Heart left ventricle (tissue), 16 donors: ENCODE measurements at regions of chr18 and their contacts with region 1.

Region 1: DNA sequence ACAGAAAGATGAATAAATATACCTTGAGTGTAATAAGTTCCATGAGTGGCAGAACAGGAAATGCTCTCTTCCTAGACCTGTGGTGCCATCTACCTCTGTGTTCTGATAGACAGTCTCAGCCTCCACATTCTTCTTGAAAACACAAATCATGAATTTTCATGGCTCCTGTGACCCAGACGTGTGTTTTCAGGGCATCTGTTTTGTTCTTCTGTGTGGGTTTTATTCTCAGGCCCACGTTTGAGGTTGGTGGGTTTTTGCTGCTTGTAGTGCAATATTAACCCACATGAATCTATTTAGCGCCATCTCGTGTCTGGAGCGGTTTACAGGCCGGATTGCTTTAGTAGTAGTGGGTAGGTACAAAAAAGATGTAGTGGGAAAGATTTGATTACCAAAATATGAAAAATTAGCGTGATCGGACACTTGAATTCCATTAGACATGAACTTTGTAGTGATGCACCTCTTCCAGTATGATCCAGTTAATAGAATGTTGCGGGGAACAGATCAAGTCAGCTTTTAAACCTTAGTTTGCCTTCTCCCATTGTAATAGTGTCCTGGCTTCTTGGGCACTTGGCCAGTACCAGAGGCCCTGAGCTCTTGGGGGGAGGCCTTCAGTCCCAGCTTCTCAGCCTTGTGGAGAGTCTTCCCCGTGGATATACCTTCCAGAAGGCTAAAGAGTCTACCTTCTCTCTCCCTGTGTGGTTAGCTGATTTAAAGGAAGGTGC is 256.5 kb downstream of the TPGS2 start:
- DNase-seq: peak in 1 of 5 donors; percentile 39
- ATAC-seq: peak; percentile 53 to 77 (median 69)
- H3K4me3 ChIP-seq: no peak overlapping the region
- H3K27ac ChIP-seq: peak overlapping the region in 6 of 12 donors; percentile 6 to 45 (median 24)
- H3K4me1 ChIP-seq: peaks cover 0 to 17% (median 0%) of the 10 kb centered on the region in 12 donors
- H3K27me3 ChIP-seq: peaks cover 0 to 2% (median 0%) of the 10 kb centered on the region in 9 donors
- CTCF ChIP-seq: peak; percentile 11 to 67 (median 51)
- POLR2A ChIP-seq: no peak

Region 2: GRCh38 chr18:36095936-36096519 is 476.3 kb before region 1 on chr18:
- intact Hi-C with region 1: loop called in 3 of 10 experiments (anchors 10 kb)
- DNase-seq: no peak
- ATAC-seq: peak in 1 of 4 donors; percentile 42
- H3K4me3 ChIP-seq: no peak overlapping the region
- H3K27ac ChIP-seq: no peak overlapping the region
- H3K4me1 ChIP-seq: no peaks in the 10 kb centered on the region
- H3K27me3 ChIP-seq: peaks cover 0 to 5% (median 0%) of the 10 kb centered on the region in 9 donors
- CTCF ChIP-seq: peak; percentile 34 to 77 (median 54)
- POLR2A ChIP-seq: no peak

Region 3: DNA sequence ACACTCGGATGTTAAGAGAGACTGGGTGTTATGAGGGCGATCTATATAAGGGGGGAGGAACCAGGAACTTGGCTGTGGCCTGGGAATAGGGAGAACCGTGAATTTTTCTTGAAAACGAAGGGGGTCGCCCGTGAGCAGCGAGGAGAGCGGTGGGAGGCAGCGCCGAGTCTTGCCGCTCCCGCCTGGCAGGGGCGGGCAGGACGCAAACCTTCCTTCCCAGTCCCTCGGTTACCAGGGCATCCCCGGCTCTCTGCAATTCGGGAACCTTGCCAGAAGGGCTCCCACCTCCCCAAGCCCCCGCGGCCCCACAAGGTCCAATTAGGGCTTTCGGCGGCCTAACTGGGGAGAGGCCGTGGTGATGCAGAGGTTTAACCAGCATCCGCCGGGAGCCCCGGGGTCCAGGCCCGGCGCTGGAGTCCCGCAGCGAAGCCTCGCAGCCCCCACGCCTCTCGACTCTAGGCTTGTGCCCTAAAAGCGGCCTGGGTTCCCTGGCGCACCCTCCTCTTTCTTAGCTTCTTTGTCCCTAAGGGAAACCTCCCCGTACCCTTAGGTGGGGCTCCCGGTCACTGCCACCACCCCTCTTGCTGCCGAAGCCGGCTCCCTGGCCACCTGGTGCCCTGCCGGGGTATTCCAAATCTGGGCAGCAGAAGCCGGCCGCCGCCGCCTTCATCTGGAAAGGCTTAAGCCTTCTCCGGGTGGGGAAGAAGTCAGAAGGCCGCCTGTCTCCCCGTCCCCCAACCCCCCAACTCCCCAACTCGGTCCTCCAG is 275.5 kb before region 1 on chr18:
- intact Hi-C with region 1: loop called in 9 of 10 experiments (anchors 2 to 10 kb)
- DNase-seq: peak; percentile 69 to 76 (median 72)
- ATAC-seq: peak; percentile 41 to 72 (median 52)
- H3K4me3 ChIP-seq: peak overlapping the region; percentile 36 to 92 (median 75)
- H3K27ac ChIP-seq: peak overlapping the region in 11 of 12 donors; percentile 64 to 94 (median 89)
- H3K4me1 ChIP-seq: peaks cover 0 to 33% (median 11%) of the 10 kb centered on the region in 12 donors
- H3K27me3 ChIP-seq: peaks cover 0 to 59% (median 9%) of the 10 kb centered on the region in 9 donors
- CTCF ChIP-seq: peak in 7 of 12 donors; percentile 31 to 61 (median 51)
- POLR2A ChIP-seq: no peak

Region 4: GRCh38 chr18:36392164-36392978 is 179.9 kb before region 1 on chr18:
- intact Hi-C with region 1: loop called in 1 of 10 experiments (anchors 10 kb)
- DNase-seq: no peak
- ATAC-seq: peak in 1 of 4 donors; percentile 1
- H3K4me3 ChIP-seq: no peak overlapping the region
- H3K27ac ChIP-seq: peak overlapping the region; percentile 54 to 96 (median 86)
- H3K4me1 ChIP-seq: peaks cover 0 to 71% (median 23%) of the 10 kb centered on the region in 12 donors
- H3K27me3 ChIP-seq: no peaks in the 10 kb centered on the region
- CTCF ChIP-seq: no peak
- POLR2A ChIP-seq: no peak

Region 5: DNA sequence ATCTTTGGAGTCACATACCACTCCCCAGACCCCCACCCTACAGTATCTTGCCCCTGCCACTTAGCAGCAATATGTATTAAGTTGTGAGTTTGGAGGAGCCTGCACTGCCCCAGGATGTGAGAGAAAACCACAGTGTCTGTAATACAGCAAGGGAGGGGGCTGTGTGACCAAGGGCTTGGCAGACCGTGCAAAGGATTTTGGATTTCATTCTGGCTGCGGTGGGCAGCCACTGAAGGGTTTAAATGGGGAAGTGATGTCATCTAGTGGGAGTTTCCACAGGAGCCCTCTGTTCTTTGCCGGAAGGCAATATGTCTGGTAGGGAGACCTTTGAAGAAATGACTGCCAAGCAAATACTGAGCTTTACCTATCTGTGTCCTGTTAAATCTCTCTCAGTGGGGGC is 72.4 kb before region 1 on chr18:
- intact Hi-C with region 1: loop called in 1 of 10 experiments (anchors 10 kb)
- DNase-seq: no peak
- ATAC-seq: peak in 3 of 4 donors; percentile 5 to 37 (median 23)
- H3K4me3 ChIP-seq: no peak overlapping the region
- H3K27ac ChIP-seq: peak overlapping the region in 8 of 12 donors; percentile 3 to 55 (median 22)
- H3K4me1 ChIP-seq: peaks cover 0 to 60% (median 8%) of the 10 kb centered on the region in 12 donors
- H3K27me3 ChIP-seq: no peaks in the 10 kb centered on the region
- CTCF ChIP-seq: no peak
- POLR2A ChIP-seq: no peak

Region 6: DNA sequence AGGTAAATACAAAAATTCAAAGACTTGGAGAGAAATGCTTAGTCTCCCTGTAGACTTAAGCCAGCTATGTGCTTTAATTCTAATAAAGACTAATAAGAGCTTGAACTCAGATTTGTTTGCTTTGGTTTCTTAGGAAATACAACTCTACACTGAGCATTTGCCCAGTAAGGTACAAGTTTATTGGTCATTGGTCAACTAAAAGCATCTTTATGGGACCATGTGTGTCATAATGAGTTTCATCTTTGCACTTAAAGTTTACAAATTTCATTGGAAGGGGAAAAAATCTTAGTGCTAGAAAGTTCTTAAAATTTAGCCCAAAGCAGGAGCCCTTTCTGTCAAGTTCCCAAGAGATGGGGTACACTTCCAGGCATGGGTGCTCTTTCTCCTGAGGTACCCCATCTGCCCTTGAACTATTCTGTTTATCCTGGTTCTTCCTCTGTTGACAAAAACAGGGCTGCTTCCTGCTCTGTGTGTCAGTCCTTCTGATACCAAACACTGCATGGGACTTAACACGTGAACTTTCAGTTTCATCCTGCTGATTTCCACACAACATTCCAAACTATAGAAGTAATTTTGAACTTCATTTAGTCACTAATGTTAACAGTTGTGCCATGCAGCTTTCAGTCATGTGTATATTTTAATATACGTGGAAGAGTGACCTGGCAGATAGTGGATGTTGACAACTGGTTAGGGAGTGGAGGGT is 56.3 kb after region 1 on chr18:
- intact Hi-C with region 1: loop called in 1 of 10 experiments (anchors 10 kb)
- DNase-seq: no peak
- ATAC-seq: peak in 3 of 4 donors; percentile 7 to 42 (median 11)
- H3K4me3 ChIP-seq: no peak overlapping the region
- H3K27ac ChIP-seq: peak overlapping the region; percentile 45 to 93 (median 82)
- H3K4me1 ChIP-seq: peaks cover 0 to 82% (median 23%) of the 10 kb centered on the region in 12 donors
- H3K27me3 ChIP-seq: no peaks in the 10 kb centered on the region
- CTCF ChIP-seq: no peak
- POLR2A ChIP-seq: no peak